PC-3 (cell line): ENCODE measurements at regions of chr5 and their contacts with region 1.

Region 1: GRCh38 chr5:127040796-127041520 is 10.6 kb upstream of the MARCHF3 start:
- DNase-seq: peak; percentile 79
- ATAC-seq: peak; percentile 87
- H3K4me3 ChIP-seq: peak overlapping the region; percentile 22; the same call in 1 of the 2 replicates
- H3K27ac ChIP-seq: peak overlapping the region; percentile 63
- H3K4me1 ChIP-seq: peaks cover 15% of the 10 kb centered on the region
- H3K27me3 ChIP-seq: no peaks in the 10 kb centered on the region
- CTCF ChIP-seq: no peak

Region 2: GRCh38 chr5:126837906-126838539 is 202.9 kb before region 1 on chr5:
- CTCF ChIA-PET with region 1: no interaction called
- POLR2A ChIA-PET with region 1: no interaction called
- intact Hi-C with region 1: loop called (anchors 1 kb)
- DNase-seq: no peak
- ATAC-seq: peak; percentile 15; the same call in 1 of the 2 replicates
- H3K4me3 ChIP-seq: no peak overlapping the region
- H3K27ac ChIP-seq: no peak overlapping the region
- H3K4me1 ChIP-seq: no peaks in the 10 kb centered on the region
- H3K27me3 ChIP-seq: no peaks in the 10 kb centered on the region
- CTCF ChIP-seq: peak; percentile 31

Region 3: GRCh38 chr5:127003798-127004495 is 37.0 kb before region 1 on chr5:
- CTCF ChIA-PET with region 1: no interaction called
- POLR2A ChIA-PET with region 1: no interaction called
- intact Hi-C with region 1: loop called (anchors 1 kb)
- DNase-seq: no peak
- ATAC-seq: peak; percentile 70
- H3K4me3 ChIP-seq: no peak overlapping the region
- H3K27ac ChIP-seq: no peak overlapping the region
- H3K4me1 ChIP-seq: no peaks in the 10 kb centered on the region
- H3K27me3 ChIP-seq: no peaks in the 10 kb centered on the region
- CTCF ChIP-seq: no peak

Region 4: GRCh38 chr5:127014573-127014972 is 26.4 kb before region 1 on chr5:
- CTCF ChIA-PET with region 1: no interaction called
- POLR2A ChIA-PET with region 1: no interaction called
- intact Hi-C with region 1: no loop called
- DNase-seq: no peak
- ATAC-seq: no peak
- H3K4me3 ChIP-seq: no peak overlapping the region
- H3K27ac ChIP-seq: no peak overlapping the region
- H3K4me1 ChIP-seq: no peaks in the 10 kb centered on the region
- H3K27me3 ChIP-seq: no peaks in the 10 kb centered on the region
- CTCF ChIP-seq: no peak

Region 5: DNA sequence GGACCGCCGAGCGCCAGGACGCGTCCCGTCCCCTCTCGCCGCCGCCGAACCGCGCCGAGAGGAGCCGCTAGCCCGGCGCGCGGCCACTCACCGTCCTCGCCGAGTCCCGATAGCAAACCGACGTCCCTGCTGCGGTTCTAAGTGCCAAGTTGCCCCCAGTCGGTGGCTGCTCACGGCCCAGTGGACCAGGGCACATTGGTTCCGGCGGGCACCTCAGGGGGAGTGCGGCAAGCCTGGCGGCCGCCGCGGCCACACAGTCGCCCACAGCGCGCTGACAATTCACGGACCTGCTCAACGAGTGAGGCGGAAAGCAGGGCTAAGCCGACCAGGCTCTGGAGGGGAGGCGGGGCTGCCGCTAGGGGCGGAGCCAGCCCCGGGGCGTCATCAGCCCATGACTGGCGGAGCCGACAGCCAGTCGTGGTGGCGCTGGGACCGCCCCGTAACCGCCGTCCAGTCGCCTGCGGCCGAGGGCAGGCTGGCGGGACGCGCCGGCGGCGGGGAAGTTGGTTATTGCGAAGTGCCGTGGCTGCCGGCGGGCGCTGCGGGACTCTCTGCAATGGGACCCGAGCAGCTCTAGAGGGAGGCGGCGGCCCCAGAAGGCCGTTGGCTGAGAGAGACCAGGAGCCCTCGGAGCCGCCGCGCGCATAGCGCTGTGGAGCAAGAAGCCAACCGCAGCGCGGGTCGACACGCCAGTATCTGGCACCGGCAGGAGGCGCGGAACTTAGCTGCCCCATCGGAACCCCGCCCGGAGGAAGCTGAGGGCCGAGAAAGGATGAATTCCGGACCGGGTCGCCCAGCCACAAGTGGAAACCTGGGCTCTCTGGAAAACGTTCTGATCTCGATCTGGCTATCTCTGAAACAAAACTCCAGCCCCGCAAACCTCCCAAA is 10.5 kb before region 1 on chr5 and contains the start of gene MARCHF3:
- CTCF ChIA-PET with region 1: interaction called, 3 read pairs
- POLR2A ChIA-PET with region 1: no interaction called
- intact Hi-C with region 1: loop called (anchors 1 kb)
- DNase-seq: peak; percentile 97
- ATAC-seq: peak; percentile 91
- H3K4me3 ChIP-seq: peak within 1 kb of the TSS; percentile 91
- H3K27ac ChIP-seq: no peak within 1 kb of the TSS
- H3K4me1 ChIP-seq: peaks cover 19% of the 10 kb centered on the region
- H3K27me3 ChIP-seq: no peaks in the 10 kb centered on the region
- CTCF ChIP-seq: peak; percentile 36; the same call in 1 of the 2 replicates
- total RNA-seq, gene MARCHF3: 1.3 and 2.5 TPM in 2 replicates

Region 6: GRCh38 chr5:127072861-127073846 is 32.2 kb after region 1 on chr5 and contains the start of gene C5orf63:
- CTCF ChIA-PET with region 1: interaction called, 3 read pairs
- POLR2A ChIA-PET with region 1: no interaction called
- intact Hi-C with region 1: loop called (anchors 2 kb)
- DNase-seq: peak; percentile 59
- ATAC-seq: peak; percentile 90
- H3K4me3 ChIP-seq: peak within 1 kb of the TSS; percentile 73
- H3K27ac ChIP-seq: no peak within 1 kb of the TSS
- H3K4me1 ChIP-seq: no peaks in the 10 kb centered on the region; the same call in 1 of the 2 replicates
- H3K27me3 ChIP-seq: no peaks in the 10 kb centered on the region
- CTCF ChIP-seq: no peak
- total RNA-seq, gene C5orf63: 2.9 and 3.7 TPM in 2 replicates

Region 7: DNA sequence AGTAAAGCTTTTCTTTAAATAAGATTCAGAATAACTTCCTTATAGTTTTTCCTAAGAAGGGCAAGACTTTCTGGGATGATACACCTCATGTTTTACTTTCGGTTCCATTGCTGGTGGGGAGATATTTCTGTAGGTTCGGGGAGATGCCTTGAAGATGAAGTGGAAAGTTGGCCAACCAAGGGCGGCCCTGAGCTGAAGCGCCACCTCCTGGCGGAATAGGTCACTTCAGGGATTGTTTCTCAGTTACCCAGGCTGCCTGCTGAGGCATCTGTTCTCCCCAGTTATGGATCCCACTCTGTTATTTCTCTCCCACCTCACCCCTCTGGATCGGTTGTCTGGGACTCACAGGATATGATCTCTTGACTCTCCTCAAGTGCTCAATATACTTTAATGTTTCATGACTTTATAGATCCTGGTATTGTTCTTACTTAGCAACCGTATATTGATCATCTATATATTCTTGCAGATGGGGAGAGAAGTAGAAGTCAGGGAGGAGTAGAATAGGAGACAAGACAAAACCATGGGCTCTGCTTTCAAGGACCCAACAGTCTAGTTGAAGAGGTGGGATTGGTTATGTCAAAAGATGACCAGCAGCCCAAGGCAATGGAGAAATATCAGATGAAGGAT is 273.0 kb after region 1 on chr5:
- CTCF ChIA-PET with region 1: no interaction called
- POLR2A ChIA-PET with region 1: no interaction called
- intact Hi-C with region 1: loop called (anchors 5 kb)
- DNase-seq: peak; percentile 71
- ATAC-seq: peak; percentile 80
- H3K4me3 ChIP-seq: no peak overlapping the region
- H3K27ac ChIP-seq: no peak overlapping the region
- H3K4me1 ChIP-seq: no peaks in the 10 kb centered on the region
- H3K27me3 ChIP-seq: peaks cover 51% of the 10 kb centered on the region
- CTCF ChIP-seq: peak; percentile 89